AG04449 (cell line): ENCODE measurements at regions of chr5 and their contacts with region 1.

Region 1: GRCh38 chr5:150217873-150218692 is 28.2 kb downstream of the SLC6A7 start:
- DNase-seq: peak; percentile 37
- H3K4me3 ChIP-seq: no peak overlapping the region
- CTCF ChIP-seq: peak; percentile 89

Region 2: DNA sequence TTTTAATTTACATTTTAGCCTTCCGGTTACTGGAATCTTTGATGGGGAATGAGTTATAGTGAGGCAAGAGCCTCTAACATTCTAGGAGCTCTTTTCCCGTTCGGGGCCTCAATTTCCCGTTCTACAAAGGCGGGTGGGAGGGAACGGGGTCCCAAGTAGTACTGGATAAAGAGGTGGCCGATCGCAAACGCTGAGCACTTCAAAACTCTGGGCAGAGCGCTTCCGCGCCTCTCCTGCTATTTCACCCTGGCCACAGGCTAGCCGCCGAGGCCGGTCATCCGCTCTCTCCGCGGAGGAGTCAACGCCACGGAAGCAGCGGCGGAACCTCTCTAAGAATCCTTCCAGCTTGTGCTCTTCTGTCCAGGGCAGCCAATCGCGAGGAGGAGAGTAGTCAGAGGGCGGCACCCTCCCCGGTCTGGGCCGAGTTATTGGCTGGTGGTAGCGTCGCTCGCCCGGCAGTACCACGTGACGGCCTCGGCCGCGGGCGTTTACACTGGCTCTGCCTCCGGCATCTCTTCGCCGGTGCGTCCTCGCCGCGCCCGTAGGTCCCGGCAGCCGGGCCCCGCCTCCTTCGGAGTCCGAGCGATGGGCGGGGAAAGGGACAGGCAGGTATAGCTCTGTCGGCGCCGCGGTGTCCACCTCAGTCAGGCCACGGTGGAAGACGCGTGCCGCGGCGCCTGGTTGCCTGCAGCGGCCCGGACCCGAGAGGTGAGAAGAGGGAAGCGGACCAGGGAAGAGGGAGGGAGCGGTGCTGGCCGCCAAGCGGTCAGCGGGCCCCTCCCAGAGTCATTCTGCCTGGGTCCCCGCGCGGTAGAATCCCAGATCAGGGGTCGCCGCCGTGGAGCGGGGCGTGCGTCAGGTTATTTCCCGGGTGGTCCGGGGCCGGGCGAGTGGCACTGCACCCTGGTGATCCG is 257.6 kb before region 1 on chr5 and contains the start of gene SLC26A2:
- CTCF ChIA-PET with region 1: interaction called, 11 read pairs
- POLR2A ChIA-PET with region 1: no interaction called
- DNase-seq: peak; percentile 87
- H3K4me3 ChIP-seq: peak within 1 kb of the TSS; percentile 78
- CTCF ChIP-seq: no peak

Region 3: GRCh38 chr5:150052956-150053712 is 164.9 kb before region 1 on chr5:
- CTCF ChIA-PET with region 1: no interaction called
- POLR2A ChIA-PET with region 1: no interaction called
- DNase-seq: no peak
- H3K4me3 ChIP-seq: no peak overlapping the region
- CTCF ChIP-seq: no peak

Region 4: GRCh38 chr5:150122158-150122510 is 95.9 kb before region 1 on chr5:
- CTCF ChIA-PET with region 1: interaction called, 222 read pairs
- POLR2A ChIA-PET with region 1: no interaction called
- DNase-seq: no peak
- H3K4me3 ChIP-seq: no peak overlapping the region
- CTCF ChIP-seq: peak; percentile 33

Region 5: GRCh38 chr5:150161242-150162141 is 56.6 kb before region 1 on chr5:
- CTCF ChIA-PET with region 1: interaction called, 81 read pairs
- POLR2A ChIA-PET with region 1: no interaction called
- DNase-seq: no peak
- H3K4me3 ChIP-seq: no peak overlapping the region
- CTCF ChIP-seq: peak; percentile 98

Region 6: GRCh38 chr5:150234576-150235499 is 16.8 kb after region 1 on chr5:
- CTCF ChIA-PET with region 1: interaction called, 14 read pairs
- POLR2A ChIA-PET with region 1: no interaction called
- DNase-seq: no peak
- H3K4me3 ChIP-seq: no peak overlapping the region
- CTCF ChIP-seq: no peak

Region 7: GRCh38 chr5:150256410-150257064 is 38.5 kb after region 1 on chr5:
- CTCF ChIA-PET with region 1: no interaction called
- POLR2A ChIA-PET with region 1: no interaction called
- DNase-seq: no peak
- H3K4me3 ChIP-seq: no peak overlapping the region
- CTCF ChIP-seq: no peak